Caco-2 (cell line): ENCODE measurements at regions of chr17 and their contacts with region 1.

Region 1: GRCh38 chr17:73192894-73193701 is at the start of gene COG1:
- DNase-seq: peak; percentile 81 to 83
- H3K4me3 ChIP-seq: peak within 1 kb of the TSS; percentile 95
- H3K4me3 Mint-ChIP-seq: peak within 1 kb of the TSS; percentile 100
- H3K27ac Mint-ChIP-seq: peak within 1 kb of the TSS; percentile 99
- H3K4me1 ChIP-seq: no peaks in the 10 kb centered on the region; the same call in 1 of the 2 replicates
- H3K4me1 Mint-ChIP-seq: no peaks in the 10 kb centered on the region
- H3K27me3 ChIP-seq: no peaks in the 10 kb centered on the region
- H3K27me3 Mint-ChIP-seq: no peaks in the 10 kb centered on the region
- CTCF ChIP-seq: peak in 1 of 2 experiments; percentile 4
- total RNA-seq, gene COG1: 36.8 and 37.3 TPM in 2 replicates

Region 2: DNA sequence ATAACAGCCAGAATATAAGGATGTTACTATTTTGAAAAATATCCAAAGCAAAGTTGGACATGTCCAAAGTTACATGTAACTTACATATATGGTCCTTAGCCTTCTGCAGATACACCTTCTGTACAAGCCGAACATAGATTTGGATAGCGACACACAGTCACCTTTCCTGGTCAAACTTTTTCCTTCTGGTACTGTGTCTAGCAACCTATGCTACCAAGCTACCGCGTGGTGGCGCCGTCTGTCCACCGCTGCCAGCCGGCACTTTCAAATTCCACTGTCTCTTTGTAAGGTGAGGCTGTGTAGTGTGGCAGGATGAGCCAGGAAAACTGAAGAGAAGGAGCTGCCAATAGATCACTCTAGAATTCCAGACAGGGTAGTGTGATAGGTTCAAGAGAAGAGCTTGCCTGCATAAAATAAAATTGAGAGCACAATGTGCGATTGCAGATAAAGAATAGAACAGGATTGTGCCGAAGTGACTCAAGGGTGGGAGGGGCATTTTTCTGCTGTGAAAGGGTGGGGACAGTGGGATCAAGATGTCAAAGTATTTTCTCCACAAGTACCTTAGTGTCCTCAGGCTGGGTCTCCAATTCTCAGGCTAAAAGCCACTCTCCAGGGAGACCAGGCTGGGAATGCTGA is 467.5 kb before region 1 on chr17:
- CTCF ChIA-PET with region 1: interaction called, 46 read pairs
- POLR2A ChIA-PET with region 1: interaction called, 3 read pairs
- intact Hi-C with region 1: loop called (anchors 1 kb)
- DNase-seq: peak; percentile 62 to 78
- H3K4me3 ChIP-seq: no peak overlapping the region
- H3K4me3 Mint-ChIP-seq: no peak overlapping the region
- H3K27ac Mint-ChIP-seq: no peak overlapping the region
- H3K4me1 ChIP-seq: no peaks in the 10 kb centered on the region
- H3K4me1 Mint-ChIP-seq: peaks cover 12% of the 10 kb centered on the region
- H3K27me3 ChIP-seq: no peaks in the 10 kb centered on the region; the same call in 1 of the 2 replicates
- H3K27me3 Mint-ChIP-seq: no peaks in the 10 kb centered on the region
- CTCF ChIP-seq: peak; percentile 95 to 97

Region 3: DNA sequence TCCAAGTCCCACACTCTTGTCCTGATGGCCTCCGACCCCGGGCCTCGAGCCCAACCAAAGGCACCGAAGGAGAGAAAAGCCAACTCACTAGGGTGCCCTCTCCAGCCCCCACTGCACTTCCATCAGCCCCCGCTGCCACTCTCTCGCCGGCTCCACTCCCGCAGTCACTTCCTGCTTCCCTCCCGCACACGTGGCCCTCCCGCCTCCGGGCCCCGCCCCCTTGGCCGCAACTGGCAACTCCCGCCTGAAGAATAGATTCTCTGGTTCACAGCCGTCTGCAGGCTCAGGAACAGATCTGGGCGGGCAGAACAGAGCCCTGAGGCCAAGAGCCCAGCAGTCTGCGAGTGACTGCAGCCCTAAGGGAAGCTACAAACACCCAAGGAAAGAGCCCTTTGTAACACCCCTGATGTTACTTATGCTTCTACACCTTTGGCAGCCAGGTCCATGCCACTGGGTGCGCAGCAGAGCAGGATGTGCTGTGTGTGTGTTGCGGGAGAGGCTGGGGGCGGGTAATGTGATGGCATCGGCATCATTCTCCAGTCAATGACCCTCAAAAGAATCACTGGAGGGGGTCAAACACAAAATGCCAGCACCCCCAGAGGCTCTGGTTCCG is 100.5 kb before region 1 on chr17 and contains the start of gene SLC39A11:
- CTCF ChIA-PET with region 1: interaction called, 4 read pairs
- POLR2A ChIA-PET with region 1: no interaction called
- intact Hi-C with region 1: loop called (anchors 1 kb)
- DNase-seq: peak; percentile 94 to 95
- H3K4me3 ChIP-seq: peak within 1 kb of the TSS; percentile 66
- H3K4me3 Mint-ChIP-seq: peak within 1 kb of the TSS; percentile 93
- H3K27ac Mint-ChIP-seq: peak within 1 kb of the TSS; percentile 82
- H3K4me1 ChIP-seq: 0 out of 2 replicates have a peak, but pooled peaks cover 5% of the 10 kb centered on the region
- H3K4me1 Mint-ChIP-seq: no peaks in the 10 kb centered on the region
- H3K27me3 ChIP-seq: no peaks in the 10 kb centered on the region
- H3K27me3 Mint-ChIP-seq: no peaks in the 10 kb centered on the region
- CTCF ChIP-seq: no peak
- total RNA-seq, gene SLC39A11: 24.9 and 26.4 TPM in 2 replicates

Region 4: DNA sequence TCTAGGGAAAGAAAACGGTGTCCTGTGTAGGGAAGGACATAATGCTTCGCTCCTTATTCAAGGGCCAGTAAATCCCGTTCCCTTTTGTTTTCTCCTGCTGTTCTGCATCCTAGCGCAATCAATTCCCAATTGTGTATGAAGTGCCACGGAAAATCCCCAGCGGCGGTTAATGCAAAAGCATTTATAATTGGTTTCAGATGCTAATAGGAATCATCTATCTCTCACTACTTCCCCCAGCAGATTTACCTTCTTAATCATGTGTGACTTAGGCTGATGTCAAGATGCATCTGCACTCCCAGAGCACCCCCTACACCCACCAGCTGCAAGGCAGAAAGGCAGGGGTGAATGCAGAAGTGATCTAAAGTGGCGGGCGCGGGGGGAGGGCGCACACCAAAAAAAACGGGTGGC is 61.0 kb before region 1 on chr17:
- CTCF ChIA-PET with region 1: no interaction called
- POLR2A ChIA-PET with region 1: no interaction called
- intact Hi-C with region 1: no loop called
- DNase-seq: no peak
- H3K4me3 ChIP-seq: no peak overlapping the region
- H3K4me3 Mint-ChIP-seq: no peak overlapping the region
- H3K27ac Mint-ChIP-seq: no peak overlapping the region
- H3K4me1 ChIP-seq: no peaks in the 10 kb centered on the region
- H3K4me1 Mint-ChIP-seq: no peaks in the 10 kb centered on the region
- H3K27me3 ChIP-seq: no peaks in the 10 kb centered on the region; the same call in 1 of the 2 replicates
- H3K27me3 Mint-ChIP-seq: no peaks in the 10 kb centered on the region
- CTCF ChIP-seq: no peak

Region 5: GRCh38 chr17:73203135-73203787 is 10.2 kb after region 1 on chr17:
- CTCF ChIA-PET with region 1: no interaction called
- POLR2A ChIA-PET with region 1: no interaction called
- intact Hi-C with region 1: loop called (anchors 1 kb)
- DNase-seq: peak; percentile 28 to 57
- H3K4me3 ChIP-seq: no peak overlapping the region
- H3K4me3 Mint-ChIP-seq: no peak overlapping the region
- H3K27ac Mint-ChIP-seq: no peak overlapping the region
- H3K4me1 ChIP-seq: peaks cover 13% of the 10 kb centered on the region
- H3K4me1 Mint-ChIP-seq: no peaks in the 10 kb centered on the region
- H3K27me3 ChIP-seq: no peaks in the 10 kb centered on the region
- H3K27me3 Mint-ChIP-seq: no peaks in the 10 kb centered on the region
- CTCF ChIP-seq: no peak

Region 6: DNA sequence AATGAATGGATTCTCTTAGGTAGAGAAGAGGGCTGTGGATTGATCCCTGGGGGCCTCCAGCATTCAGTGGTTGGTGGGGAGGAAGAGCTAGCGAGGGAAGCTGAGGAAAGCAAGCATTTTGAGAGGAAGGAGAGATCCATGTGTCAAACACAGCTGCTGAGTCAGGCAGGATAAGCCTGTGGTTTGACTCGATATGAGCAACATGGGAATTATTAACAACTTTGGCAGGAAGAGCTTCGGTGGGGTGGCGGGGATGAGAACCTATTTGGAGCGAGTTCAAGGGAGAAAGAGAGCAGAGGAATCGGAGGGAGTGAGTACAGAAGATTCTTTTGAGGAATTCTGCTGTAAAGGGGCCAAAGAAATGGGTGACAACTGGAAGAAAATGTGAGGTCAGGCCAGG is 178.2 kb after region 1 on chr17:
- CTCF ChIA-PET with region 1: interaction called, 3 read pairs
- POLR2A ChIA-PET with region 1: no interaction called
- intact Hi-C with region 1: loop called (anchors 1 kb)
- DNase-seq: no peak
- H3K4me3 ChIP-seq: no peak overlapping the region
- H3K4me3 Mint-ChIP-seq: no peak overlapping the region
- H3K27ac Mint-ChIP-seq: no peak overlapping the region
- H3K4me1 ChIP-seq: no peaks in the 10 kb centered on the region
- H3K4me1 Mint-ChIP-seq: no peaks in the 10 kb centered on the region
- H3K27me3 ChIP-seq: no peaks in the 10 kb centered on the region; the same call in none of the 2 replicates
- H3K27me3 Mint-ChIP-seq: peaks cover 22% of the 10 kb centered on the region
- CTCF ChIP-seq: no peak